Ascending aorta (tissue), 2 donors: ENCODE measurements at regions of chr18 and their contacts with region 1.

Region 1: DNA sequence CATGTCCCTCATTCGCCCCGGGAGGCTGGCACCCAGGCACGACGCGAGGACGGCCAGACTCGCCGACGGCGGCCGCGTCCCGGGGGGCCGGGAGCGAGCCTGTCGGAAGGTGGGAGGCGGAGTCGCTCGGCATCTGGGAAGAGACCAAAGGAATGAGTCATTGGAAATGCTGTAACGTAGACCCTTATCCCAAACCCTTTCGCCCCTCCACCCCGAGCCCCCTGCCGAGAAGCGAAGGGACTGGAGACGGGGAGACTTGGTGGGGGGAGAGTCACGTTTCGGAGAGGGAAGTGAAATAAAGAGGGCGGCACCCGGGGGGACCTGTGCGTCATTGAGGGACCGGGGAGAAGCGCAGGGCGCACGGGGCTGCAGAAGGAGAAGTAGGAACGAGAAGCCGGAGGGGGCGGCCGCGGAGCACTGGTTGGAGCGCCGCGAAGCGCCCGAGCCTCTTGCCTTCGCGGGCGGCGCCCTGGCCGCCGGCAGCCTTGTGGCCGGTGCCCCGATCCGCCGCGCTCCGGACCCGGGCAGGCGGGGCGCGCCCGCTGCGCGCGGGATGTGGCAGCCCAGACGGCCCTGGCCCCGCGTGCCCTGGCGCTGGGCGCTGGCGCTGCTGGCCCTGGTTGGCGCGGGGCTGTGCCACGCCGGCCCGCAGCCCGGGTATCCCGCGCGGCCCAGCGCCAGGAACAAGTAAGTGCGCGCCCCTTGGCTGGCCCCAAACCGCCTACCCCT is at the start of gene EMILIN2:
- DNase-seq: peak; percentile 52 to 93
- H3K4me3 ChIP-seq: peak within 1 kb of the TSS; percentile 72 to 77
- H3K27ac ChIP-seq: peak within 1 kb of the TSS; percentile 79 to 86
- H3K4me1 ChIP-seq: peaks cover 4 to 7% of the 10 kb centered on the region in 2 donors
- H3K27me3 ChIP-seq: no peaks in the 10 kb centered on the region
- CTCF ChIP-seq: no peak
- total RNA-seq, gene EMILIN2: 22.4 TPM

Region 2: GRCh38 chr18:2825603-2826175 is 21.1 kb before region 1 on chr18:
- intact Hi-C with region 1: no loop called
- DNase-seq: no peak
- H3K4me3 ChIP-seq: no peak overlapping the region
- H3K27ac ChIP-seq: no peak overlapping the region
- H3K4me1 ChIP-seq: no peaks in the 10 kb centered on the region
- H3K27me3 ChIP-seq: no peaks in the 10 kb centered on the region
- CTCF ChIP-seq: no peak

Region 3: GRCh38 chr18:2881088-2881839 is 34.5 kb after region 1 on chr18:
- intact Hi-C with region 1: loop called (anchors 2 kb)
- DNase-seq: peak in 1 of 2 donors; percentile 92
- H3K4me3 ChIP-seq: no peak overlapping the region
- H3K27ac ChIP-seq: peak overlapping the region; percentile 82 to 93
- H3K4me1 ChIP-seq: peaks cover 0 to 27% of the 10 kb centered on the region in 2 donors
- H3K27me3 ChIP-seq: no peaks in the 10 kb centered on the region
- CTCF ChIP-seq: peak in 1 of 3 experiments; percentile 7

Region 4: GRCh38 chr18:3012964-3013804 is 166.4 kb after region 1 on chr18 and contains the start of gene LPIN2:
- intact Hi-C with region 1: no loop called
- DNase-seq: peak; percentile 97 to 100
- H3K4me3 ChIP-seq: peak within 1 kb of the TSS; percentile 98 to 99
- H3K27ac ChIP-seq: peak within 1 kb of the TSS; percentile 92 to 100
- H3K4me1 ChIP-seq: peaks cover 4 to 37% of the 10 kb centered on the region in 2 donors
- H3K27me3 ChIP-seq: no peaks in the 10 kb centered on the region
- CTCF ChIP-seq: no peak
- total RNA-seq, gene LPIN2: 11.6 TPM